ENCODE measurements at regions of chr2 and their contacts with region 1.

Region 1: GRCh38 chr2:105114551-105114950 is 76.7 kb downstream of the MRPS9 start:
- DNase-seq: peak in 2 of 7 donors; percentile 32 to 59
- H3K4me3 ChIP-seq: no peak overlapping the region
- H3K27ac ChIP-seq: no peak overlapping the region
- H3K4me1 ChIP-seq: no peaks in the 10 kb centered on the region
- H3K27me3 ChIP-seq: no peaks in the 10 kb centered on the region
- CTCF ChIP-seq: peak; percentile 45 to 92 (median 62)
- POLR2A ChIP-seq: no peak

Region 2: DNA sequence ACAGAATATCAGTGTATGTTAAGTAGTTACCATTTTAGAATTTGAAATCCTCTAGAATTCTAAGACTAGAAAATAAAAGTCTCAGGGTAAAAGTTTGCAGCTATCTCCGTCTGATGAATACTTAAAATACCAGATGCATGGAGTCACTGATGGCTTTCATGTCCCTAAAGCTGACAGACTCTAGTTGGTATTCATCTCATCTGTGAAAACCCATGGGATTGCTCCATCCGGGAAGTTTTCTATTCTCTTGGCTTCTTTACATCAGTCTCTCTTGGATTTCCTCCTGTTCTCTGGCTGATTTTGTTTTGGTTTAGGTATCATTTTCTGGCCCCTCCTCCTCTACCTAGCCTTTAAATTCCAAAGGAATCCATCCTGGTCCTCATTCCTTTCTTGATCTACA is 726.3 kb before region 1 on chr2:
- intact Hi-C with region 1: no loop called
- DNase-seq: no peak
- H3K4me3 ChIP-seq: no peak overlapping the region
- H3K27ac ChIP-seq: no peak overlapping the region
- H3K4me1 ChIP-seq: no peaks in the 10 kb centered on the region
- H3K27me3 ChIP-seq: no peaks in the 10 kb centered on the region
- CTCF ChIP-seq: no peak
- POLR2A ChIP-seq: no peak

Region 3: GRCh38 chr2:105231232-105231619 is 116.7 kb after region 1 on chr2:
- intact Hi-C with region 1: loop called in 1 of 2 experiments (anchors 5 kb)
- DNase-seq: no peak
- H3K4me3 ChIP-seq: no peak overlapping the region
- H3K27ac ChIP-seq: no peak overlapping the region
- H3K4me1 ChIP-seq: peaks cover 0 to 10% of the 10 kb centered on the region in 2 donors
- H3K27me3 ChIP-seq: no peaks in the 10 kb centered on the region
- CTCF ChIP-seq: no peak
- POLR2A ChIP-seq: no peak

Region 4: DNA sequence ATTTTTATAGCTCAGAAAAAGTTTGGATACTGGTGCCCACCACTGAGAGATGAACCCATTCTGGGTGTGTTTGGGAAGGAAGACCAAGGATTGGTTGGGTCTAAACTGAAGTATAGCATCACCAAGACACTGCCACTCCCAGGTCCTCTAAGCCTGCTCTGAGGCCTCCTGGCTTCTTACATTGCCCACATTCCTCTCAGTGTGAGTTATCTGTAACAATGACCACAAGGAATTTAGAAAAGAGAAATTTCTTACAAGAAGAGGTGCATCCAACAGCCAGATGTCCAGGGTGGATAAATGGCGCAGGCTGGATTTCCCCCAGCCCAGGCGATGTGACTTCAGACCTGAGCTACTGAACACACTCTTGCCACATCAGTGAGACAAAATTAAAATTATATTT is 125.4 kb after region 1 on chr2:
- intact Hi-C with region 1: loop called in 1 of 2 experiments (anchors 2 kb)
- DNase-seq: no peak
- H3K4me3 ChIP-seq: no peak overlapping the region
- H3K27ac ChIP-seq: no peak overlapping the region
- H3K4me1 ChIP-seq: peaks cover 0 to 10% of the 10 kb centered on the region in 2 donors
- H3K27me3 ChIP-seq: no peaks in the 10 kb centered on the region
- CTCF ChIP-seq: no peak
- POLR2A ChIP-seq: no peak

Region 5: DNA sequence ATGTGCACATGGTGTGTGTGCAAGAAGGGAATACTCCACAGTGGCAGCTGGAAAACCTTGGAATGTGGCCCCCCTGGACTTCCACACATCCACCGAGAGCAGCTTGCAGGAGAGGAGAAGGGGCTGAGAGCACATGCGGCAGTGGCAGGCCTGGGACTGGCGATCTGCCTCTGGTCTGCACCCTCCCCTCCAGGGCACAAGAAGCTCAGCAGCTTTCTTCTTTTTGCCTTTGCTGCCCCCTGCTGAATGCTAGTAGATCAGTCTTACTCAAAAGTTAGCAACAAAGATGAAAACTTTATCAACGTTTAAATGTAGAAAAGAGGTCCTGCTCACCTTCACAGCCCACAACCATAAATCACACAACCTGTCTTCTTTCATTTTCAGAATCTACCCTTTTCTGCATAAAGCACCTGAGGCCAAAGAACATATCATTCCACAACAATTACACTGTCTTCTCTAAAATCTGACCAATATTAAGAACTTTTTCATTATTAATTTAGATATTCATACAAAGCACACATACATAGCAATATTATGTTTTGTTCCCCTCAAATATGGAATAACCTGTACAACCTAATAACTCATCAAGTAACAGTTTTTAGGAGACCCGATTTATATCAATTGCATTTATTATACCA is 180.4 kb after region 1 on chr2:
- intact Hi-C with region 1: loop called in 1 of 2 experiments (anchors 5 kb)
- DNase-seq: peak; percentile 74 to 87 (median 82)
- H3K4me3 ChIP-seq: no peak overlapping the region
- H3K27ac ChIP-seq: peak overlapping the region in 2 of 5 donors; percentile 50 to 66
- H3K4me1 ChIP-seq: peaks cover 3 to 15% of the 10 kb centered on the region in 2 donors
- H3K27me3 ChIP-seq: no peaks in the 10 kb centered on the region
- CTCF ChIP-seq: peak; percentile 37 to 73 (median 64)
- POLR2A ChIP-seq: no peak

Region 6: GRCh38 chr2:106219813-106220212 is 1105.3 kb after region 1 on chr2:
- intact Hi-C with region 1: no loop called
- DNase-seq: no peak
- H3K4me3 ChIP-seq: no peak overlapping the region
- H3K27ac ChIP-seq: no peak overlapping the region
- H3K4me1 ChIP-seq: no peaks in the 10 kb centered on the region
- H3K27me3 ChIP-seq: no peaks in the 10 kb centered on the region
- CTCF ChIP-seq: no peak
- POLR2A ChIP-seq: no peak

Measured in adrenal gland (tissue), 19 donors.